ENCODE measurements at regions of chr6 and their contacts with region 1.

Region 1: DNA sequence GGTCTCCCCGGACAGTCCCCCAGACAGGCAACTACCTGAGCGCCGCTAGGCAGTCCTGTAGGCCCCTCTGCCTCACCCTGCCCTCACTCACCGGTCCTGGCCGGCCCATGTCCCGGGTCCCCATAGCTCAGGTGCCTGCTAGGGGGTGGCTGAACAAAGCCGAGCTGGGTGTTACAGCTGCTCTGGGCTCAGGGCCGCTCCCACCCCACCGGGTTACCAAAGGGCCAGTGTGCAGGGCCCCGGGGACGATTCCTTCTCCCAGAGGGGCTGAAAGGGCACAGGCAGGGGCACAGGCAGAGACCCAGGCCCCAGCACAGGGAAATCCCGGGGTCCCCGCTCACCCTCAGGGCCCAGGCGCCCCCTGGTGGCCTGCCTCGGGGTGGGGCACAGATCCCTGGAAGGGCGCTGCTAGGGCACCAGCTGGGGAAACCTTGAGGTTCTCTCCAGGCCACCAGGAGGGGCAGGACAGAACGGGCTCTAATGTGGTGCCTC is 118.4 kb downstream of the GRM4 start:
- DNase-seq: peak; percentile 63 to 90 (median 88)
- ATAC-seq: peak; percentile 91
- H3K4me3 ChIP-seq: no peak overlapping the region
- H3K27ac ChIP-seq: no peak overlapping the region
- H3K4me1 ChIP-seq: peaks cover 0 to 20% of the 10 kb centered on the region in 2 experiments; a peak in 2 of 5 replicates
- H3K27me3 ChIP-seq: peaks cover 21 to 94% of the 10 kb centered on the region in 2 experiments
- CTCF ChIP-seq: peak; percentile 89 to 97 (median 93)
- EP300 ChIP-seq: no peak
- POLR2A ChIP-seq: no peak
- RAD21 ChIP-seq: peak; percentile 94 to 96

Region 2: GRCh38 chr6:33235221-33235634 is 792.3 kb before region 1 on chr6:
- CTCF ChIA-PET with region 1: no interaction called
- POLR2A ChIA-PET with region 1: no interaction called
- in situ Hi-C with region 1: no loop called
- intact Hi-C with region 1: no loop called
- DNase-seq: no peak
- ATAC-seq: no peak
- H3K4me3 ChIP-seq: no peak overlapping the region
- H3K27ac ChIP-seq: no peak overlapping the region
- H3K4me1 ChIP-seq: no peaks in the 10 kb centered on the region
- H3K27me3 ChIP-seq: peaks cover 58 to 67% of the 10 kb centered on the region in 2 experiments
- CTCF ChIP-seq: no peak
- EP300 ChIP-seq: no peak
- POLR2A ChIP-seq: no peak
- RAD21 ChIP-seq: no peak

Region 3: GRCh38 chr6:33771146-33772081 is 256.1 kb before region 1 on chr6:
- CTCF ChIA-PET with region 1: interaction called, 16 read pairs
- POLR2A ChIA-PET with region 1: interaction called, 4 read pairs
- in situ Hi-C with region 1: loop called (anchors 5 kb)
- intact Hi-C with region 1: loop called (anchors 1 kb)
- DNase-seq: peak; percentile 87 to 95 (median 92)
- ATAC-seq: peak; percentile 95
- H3K4me3 ChIP-seq: no peak overlapping the region
- H3K27ac ChIP-seq: no peak overlapping the region
- H3K4me1 ChIP-seq: peaks cover 3 to 15% of the 10 kb centered on the region in 2 experiments; a peak in 3 of 5 replicates
- H3K27me3 ChIP-seq: peaks cover 9 to 35% of the 10 kb centered on the region in 2 experiments; a peak in 4 of 5 replicates
- CTCF ChIP-seq: peak; percentile 88 to 97 (median 91)
- EP300 ChIP-seq: no peak
- POLR2A ChIP-seq: no peak; the same call in 1 of the 2 replicates
- RAD21 ChIP-seq: peak; percentile 88 to 94

Region 4: GRCh38 chr6:33851959-33852358 is 175.5 kb before region 1 on chr6:
- CTCF ChIA-PET with region 1: interaction called, 6 read pairs
- POLR2A ChIA-PET with region 1: no interaction called
- in situ Hi-C with region 1: no loop called
- intact Hi-C with region 1: loop called (anchors 1 kb)
- DNase-seq: peak; percentile 62 to 75 (median 70)
- ATAC-seq: peak; percentile 86
- H3K4me3 ChIP-seq: no peak overlapping the region
- H3K27ac ChIP-seq: no peak overlapping the region
- H3K4me1 ChIP-seq: peaks cover 4 to 22% of the 10 kb centered on the region in 2 experiments; a peak in 3 of 5 replicates
- H3K27me3 ChIP-seq: peaks cover 12 to 28% of the 10 kb centered on the region in 2 experiments; a peak in 2 of 5 replicates
- CTCF ChIP-seq: peak; percentile 78 to 87 (median 84)
- EP300 ChIP-seq: no peak
- POLR2A ChIP-seq: no peak
- RAD21 ChIP-seq: peak; percentile 33 to 73

Region 5: DNA sequence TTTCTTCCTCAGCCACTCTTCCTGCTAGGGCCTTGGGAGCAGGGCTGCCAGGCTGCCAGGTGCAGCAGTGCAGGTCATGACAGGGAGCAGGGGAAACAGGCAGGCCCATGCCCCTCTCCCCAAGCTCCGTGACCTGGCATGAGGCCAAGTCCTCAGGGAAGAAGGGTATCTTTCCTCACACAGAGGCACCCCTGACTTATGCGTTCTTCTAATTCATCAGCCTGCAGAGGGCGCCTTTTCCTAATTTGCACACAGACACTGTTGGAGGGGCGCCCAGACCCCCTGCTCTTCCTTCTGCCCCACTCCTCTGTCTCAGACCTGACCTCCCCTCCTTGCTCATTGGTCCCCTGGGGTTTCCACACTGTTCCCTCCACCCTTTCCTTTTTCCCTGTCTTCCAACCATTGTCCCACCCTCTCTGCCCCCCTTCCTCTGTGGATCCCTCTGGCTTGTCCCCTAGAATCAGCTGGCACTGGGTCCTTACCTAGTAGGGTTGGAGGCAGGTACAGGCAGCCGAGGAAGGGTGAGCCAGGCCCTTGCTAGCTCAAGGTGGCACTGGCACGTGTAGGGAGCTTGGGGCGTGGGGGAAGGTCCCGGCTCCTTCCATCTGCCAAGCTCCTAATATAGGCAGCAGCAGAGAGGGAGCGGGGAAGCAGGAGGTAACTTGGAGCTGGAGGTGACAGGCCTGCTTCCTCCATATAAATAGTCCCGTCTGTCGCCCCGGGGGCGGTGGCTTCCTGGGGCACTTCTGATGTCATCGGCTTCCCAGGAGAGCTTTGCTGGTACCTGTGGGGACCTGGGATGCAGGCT is 68.8 kb before region 1 on chr6:
- CTCF ChIA-PET with region 1: no interaction called
- POLR2A ChIA-PET with region 1: no interaction called
- in situ Hi-C with region 1: no loop called
- intact Hi-C with region 1: loop called (anchors 1 kb)
- DNase-seq: peak in 3 of 4 experiments; percentile 48 to 56 (median 50)
- ATAC-seq: peak; percentile 58; the same call in 2 of the 3 replicates
- H3K4me3 ChIP-seq: no peak overlapping the region
- H3K27ac ChIP-seq: no peak overlapping the region
- H3K4me1 ChIP-seq: peaks cover 0 to 6% of the 10 kb centered on the region in 2 experiments; a peak in 1 of 5 replicates
- H3K27me3 ChIP-seq: peaks cover 9 to 86% of the 10 kb centered on the region in 2 experiments; a peak in 4 of 5 replicates
- CTCF ChIP-seq: peak; percentile 43 to 72 (median 56)
- EP300 ChIP-seq: no peak
- POLR2A ChIP-seq: no peak
- RAD21 ChIP-seq: peak in 1 of 2 experiments; percentile 45; a peak in 2 of 4 replicates

Region 6: DNA sequence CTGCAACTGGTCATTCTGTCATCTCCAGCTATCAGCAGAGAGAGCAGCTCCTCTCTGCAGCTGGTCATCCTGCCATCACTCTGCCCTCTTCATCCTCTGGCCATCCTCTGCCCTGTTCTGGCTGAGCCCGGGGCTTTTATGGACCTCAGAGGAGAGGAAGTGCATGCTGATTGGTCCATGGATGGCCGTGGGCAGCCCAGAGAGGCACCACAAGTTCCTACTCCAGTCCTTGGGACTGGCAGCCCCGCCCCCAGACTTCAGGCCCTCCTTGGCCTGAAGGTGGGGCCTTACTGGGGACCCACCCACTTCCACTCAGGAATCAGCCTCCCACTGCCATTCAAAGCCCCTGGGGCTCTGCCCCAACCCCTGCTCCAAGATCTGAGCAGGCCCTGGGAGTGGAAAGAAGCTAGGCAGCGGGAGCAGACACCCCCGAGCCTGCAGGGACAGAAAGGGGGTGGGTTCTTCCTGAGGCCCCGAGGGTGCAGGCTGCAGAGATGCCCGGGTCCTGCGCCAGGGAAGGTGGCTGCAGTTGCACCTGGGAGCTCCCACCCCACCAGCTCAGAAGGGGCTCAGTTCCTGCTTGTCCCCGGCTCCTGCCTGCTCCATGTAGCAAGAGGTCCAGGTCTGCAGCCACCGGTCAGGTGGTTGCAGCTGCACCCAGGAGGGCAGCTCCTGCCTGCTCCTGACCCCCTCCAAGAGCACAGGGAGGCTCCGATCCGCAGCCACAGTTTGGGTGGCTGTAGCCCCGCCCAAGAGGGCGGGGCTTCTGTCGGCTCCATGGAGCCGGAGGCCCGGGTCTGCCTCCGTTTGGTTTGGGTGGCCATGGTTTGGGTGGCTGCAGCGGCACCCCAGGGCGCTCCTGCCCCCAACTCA is 175.1 kb after region 1 on chr6:
- CTCF ChIA-PET with region 1: no interaction called
- POLR2A ChIA-PET with region 1: no interaction called
- in situ Hi-C with region 1: no loop called
- intact Hi-C with region 1: no loop called
- DNase-seq: peak in 3 of 4 experiments; percentile 55 to 74 (median 71)
- ATAC-seq: peak; percentile 81
- H3K4me3 ChIP-seq: no peak overlapping the region
- H3K27ac ChIP-seq: no peak overlapping the region
- H3K4me1 ChIP-seq: peaks cover 3 to 14% of the 10 kb centered on the region in 2 experiments; a peak in 3 of 5 replicates
- H3K27me3 ChIP-seq: no peaks in the 10 kb centered on the region
- CTCF ChIP-seq: no peak
- EP300 ChIP-seq: no peak
- POLR2A ChIP-seq: no peak
- RAD21 ChIP-seq: no peak

Measured in K562 (cell line).